IMR-90 (cell line): ENCODE measurements at regions of chr9 and their contacts with region 1.

Region 1: DNA sequence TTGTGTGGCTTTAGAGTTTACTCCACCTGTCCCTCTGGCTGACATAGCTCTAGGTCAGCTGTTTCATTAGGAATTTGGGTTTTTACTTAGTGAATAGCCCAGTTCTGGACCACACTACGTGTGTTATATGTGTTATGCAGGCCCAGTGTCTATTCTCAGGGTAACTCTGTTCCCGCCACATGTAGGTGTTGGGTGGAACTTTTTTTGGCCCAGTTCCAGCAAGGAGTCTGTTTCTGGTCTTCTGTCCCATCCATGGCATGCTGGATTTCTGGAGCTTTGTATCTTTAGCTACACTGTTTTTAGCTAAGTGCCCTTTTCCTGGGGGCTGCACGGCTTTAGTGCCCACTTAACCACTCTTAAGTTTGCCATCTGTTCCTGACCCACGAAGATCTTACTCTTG is 15.5 kb downstream of the RMI1 start:
- DNase-seq: no peak
- ATAC-seq: no peak
- H3K4me3 ChIP-seq: no peak overlapping the region
- H3K27ac ChIP-seq: no peak overlapping the region
- H3K4me1 ChIP-seq: peaks cover 2% of the 10 kb centered on the region
- H3K27me3 ChIP-seq: no peaks in the 10 kb centered on the region
- CTCF ChIP-seq: no peak
- POLR2A ChIP-seq: no peak
- RAD21 ChIP-seq: no peak

Region 2: DNA sequence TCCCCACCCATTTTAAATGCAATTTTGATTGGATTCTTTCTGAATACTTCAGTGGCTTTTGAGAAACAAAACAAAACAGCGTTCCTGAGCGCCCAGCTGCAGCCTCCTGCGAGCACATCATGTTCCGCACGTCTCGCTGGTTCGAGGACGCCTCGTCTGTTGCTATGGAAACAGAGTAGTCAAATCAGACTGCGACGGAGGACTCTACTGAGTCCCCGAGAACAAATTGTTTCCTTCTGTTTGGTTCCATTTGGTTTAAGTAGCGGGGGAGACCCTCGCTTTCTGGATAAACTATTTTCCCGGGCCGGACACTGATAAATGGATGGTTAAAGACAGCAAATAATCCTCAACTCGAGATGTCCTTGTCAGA is 275.4 kb after region 1 on chr9:
- CTCF ChIA-PET with region 1: no interaction called
- POLR2A ChIA-PET with region 1: interaction called, 13 read pairs
- dilution Hi-C with region 1: no loop called
- in situ Hi-C with region 1: no loop called
- intact Hi-C with region 1: no loop called
- DNase-seq: peak; percentile 69
- ATAC-seq: peak; percentile 71
- H3K4me3 ChIP-seq: peak overlapping the region; percentile 24
- H3K27ac ChIP-seq: no peak overlapping the region
- H3K4me1 ChIP-seq: peaks cover 4% of the 10 kb centered on the region; the same call in 1 of the 2 replicates
- H3K27me3 ChIP-seq: no peaks in the 10 kb centered on the region
- CTCF ChIP-seq: no peak
- POLR2A ChIP-seq: no peak
- RAD21 ChIP-seq: no peak